ENCODE measurements at regions of chr22 and their contacts with region 1.

Region 1: GRCh38 chr22:22959147-22959827 is 71.7 kb downstream of the IGLL5 start:
- DNase-seq: peak; percentile 69 to 97 (median 90)

Region 2: GRCh38 chr22:22463855-22464540 is 495.3 kb before region 1 on chr22:
- intact Hi-C with region 1: loop called (anchors 5 kb)
- DNase-seq: peak in 40 of 42 donors; percentile 14 to 89 (median 68)

Region 3: DNA sequence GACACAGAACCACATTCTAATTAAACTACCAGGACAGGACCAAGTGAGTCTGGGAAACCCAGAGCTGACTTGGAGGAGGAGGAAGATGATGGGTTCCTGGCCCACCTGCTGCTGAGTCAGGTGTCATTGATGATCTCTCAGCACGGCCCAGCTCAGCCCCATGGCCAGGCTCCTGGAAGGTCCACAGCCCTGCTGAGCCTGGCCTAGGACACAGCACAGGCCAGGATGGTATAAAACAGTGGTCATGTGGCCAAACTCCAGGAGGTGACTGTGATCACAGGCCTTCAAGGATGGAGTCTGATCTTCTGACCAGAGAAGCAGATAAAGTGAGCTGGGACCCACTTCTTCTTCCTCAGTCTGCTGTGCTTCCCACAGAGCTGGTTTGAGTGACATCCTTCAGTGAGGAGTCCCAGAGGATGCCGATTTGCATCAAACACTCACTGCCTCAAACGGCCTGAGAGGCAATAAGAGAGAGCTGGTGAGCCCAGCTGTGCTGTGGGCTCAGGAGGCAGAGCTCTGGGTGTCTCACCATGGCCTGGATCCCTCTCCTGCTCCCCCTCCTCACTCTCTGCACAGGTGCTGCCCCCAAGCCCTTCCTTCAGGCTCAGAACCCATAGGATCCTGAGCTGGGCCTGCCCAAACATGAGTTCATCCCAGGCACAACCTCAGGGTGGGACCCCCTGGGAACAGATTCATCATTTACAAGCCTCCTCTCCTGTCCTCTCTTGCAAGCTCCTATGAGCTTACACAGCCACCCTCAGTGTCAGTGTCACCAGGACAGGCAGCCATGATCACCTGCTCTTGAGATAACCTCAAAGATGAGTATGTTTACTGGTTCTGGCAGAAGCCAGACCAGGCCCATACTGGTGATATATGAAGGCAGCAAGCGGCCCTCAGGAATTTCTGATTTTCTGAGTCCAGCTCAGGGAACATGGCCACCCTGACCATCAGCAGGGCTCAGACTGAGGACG is 109.4 kb before region 1 on chr22:
- intact Hi-C with region 1: loop called (anchors 5 kb)
- DNase-seq: no peak

Region 4: DNA sequence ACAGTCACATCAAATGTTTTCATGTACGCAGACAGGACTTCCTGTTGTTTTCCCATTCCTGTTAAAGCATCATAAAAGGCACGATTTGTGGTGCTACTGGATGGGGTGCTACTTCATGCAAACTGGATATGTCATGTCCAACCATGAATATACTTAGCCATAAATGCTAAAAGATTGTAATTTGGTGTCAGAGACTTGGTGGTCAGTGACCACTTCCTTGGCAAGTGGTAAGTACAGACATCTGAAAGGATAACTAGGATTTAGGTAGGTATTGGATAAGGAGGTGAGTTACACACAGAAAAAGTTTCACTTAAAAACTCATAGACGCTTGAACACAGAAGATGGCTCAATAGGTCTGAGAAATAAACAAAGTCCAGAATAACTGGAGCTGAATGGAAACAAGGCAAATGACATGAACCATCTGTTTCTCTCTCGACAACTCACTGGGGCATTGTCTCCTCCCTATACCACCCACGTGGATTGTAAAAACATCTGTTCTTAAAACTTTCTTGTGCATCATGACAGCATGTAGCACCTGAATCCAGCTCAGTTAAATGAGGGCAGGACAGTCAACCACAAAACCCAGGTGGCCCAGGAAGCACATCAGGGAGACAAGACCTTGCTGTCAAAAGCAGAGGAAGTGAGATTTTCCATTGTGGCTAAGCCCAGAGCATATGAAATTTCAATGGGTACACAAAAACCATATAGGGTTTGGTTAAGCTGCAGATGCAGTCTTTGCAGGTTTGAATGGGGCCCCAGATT is 93.8 kb before region 1 on chr22:
- intact Hi-C with region 1: no loop called
- DNase-seq: no peak

Region 5: DNA sequence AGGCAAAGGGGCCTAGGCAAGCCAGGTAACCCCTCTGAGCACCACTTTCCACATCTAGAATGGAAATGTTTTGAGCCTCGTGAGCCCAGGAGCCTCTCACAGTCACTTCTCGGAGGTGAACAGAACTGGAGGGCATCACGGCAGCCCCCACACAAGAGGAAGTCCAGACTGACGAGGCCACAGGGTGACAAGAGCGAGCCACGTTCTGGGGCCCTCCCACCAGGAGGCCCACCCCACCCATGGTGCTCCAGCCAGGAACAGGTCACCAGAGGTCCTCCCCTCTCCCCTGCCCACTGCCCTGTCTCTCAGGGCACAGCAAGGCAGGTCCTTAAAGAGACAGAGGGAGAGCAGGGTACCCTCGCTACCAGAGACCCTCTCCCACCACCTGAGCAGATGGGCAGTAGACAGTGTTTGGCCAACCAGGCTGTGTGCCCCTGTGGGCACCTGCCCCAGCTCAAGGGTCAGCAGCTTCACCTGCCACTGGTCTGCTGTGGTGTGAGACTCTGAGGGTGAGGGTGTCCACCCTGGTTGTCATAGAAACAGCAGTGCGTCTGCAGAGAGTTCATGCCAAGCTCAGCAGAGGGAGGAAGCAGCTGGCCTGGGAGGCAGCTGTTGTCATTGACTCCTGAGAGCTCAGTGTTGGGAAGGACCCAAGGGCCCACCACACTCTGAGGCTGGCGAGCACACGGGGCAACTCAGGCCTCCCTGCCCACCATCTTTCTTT is 151.1 kb after region 1 on chr22:
- intact Hi-C with region 1: no loop called
- DNase-seq: peak in 11 of 42 donors; percentile 24 to 62 (median 46)

Region 6: GRCh38 chr22:23128269-23129108 is 169.2 kb after region 1 on chr22:
- intact Hi-C with region 1: loop called (anchors 2 kb)
- DNase-seq: peak; percentile 62 to 97 (median 90)

Region 7: GRCh38 chr22:23281406-23282088 is 322.3 kb after region 1 on chr22:
- intact Hi-C with region 1: loop called (anchors 10 kb)
- DNase-seq: peak; percentile 82 to 96 (median 90)

Region 8: DNA sequence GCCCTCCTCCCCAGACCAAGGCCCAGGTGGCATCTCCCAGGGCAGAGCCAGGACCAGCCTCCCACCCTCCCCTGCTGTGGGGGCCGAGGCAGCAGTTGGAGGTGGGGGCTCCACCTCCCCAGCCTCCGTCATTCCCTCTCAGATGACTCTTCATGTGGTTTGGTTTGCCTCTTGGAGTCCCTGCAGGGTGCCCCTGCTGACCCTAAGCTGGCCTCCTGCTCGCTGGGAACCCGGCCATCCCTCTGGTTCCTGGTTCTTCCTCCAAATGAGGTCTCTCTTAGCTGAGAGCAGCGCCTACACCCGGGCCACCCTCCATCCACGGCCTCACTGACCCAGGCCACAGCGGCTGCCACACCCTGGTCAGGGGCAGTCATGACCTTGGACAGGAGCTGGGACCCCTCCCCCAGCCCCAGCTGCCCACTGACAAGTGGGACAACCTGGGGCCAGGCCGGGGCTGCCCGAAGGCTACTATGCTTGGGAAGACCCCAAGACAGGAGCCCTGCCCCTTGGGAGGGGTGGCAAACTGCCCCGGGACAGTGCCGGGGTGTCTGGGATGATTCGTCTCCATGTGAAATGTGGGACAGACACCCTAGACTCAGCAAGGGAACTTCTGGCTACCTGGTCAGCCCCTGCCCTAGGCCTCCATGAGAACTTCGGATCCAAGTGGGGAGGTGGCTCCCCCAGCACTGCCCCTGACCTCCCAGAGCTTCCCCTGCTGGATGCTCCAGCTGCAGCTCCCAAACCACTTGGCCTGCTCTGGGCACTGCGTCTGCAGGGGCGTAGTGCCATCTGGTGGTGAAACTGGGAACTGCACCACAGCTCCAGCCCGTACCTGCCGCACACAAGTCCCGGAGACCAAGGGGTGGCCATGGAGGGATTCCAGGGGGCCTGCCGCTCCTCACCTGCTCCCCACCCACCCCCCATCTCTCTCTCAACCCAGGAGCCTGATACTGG is 426.3 kb after region 1 on chr22:
- intact Hi-C with region 1: loop called (anchors 5 kb)
- DNase-seq: peak; percentile 56 to 96 (median 89)